ENCODE measurements at regions of chr17 and their contacts with region 1.

Region 1: GRCh38 chr17:74296548-74296936 is 22.5 kb downstream of the DNAI2 start:
- DNase-seq: peak; percentile 66 to 87 (median 78)
- H3K4me3 ChIP-seq: peak overlapping the region in 1 of 59 donors; percentile 3
- H3K27ac ChIP-seq: peak overlapping the region in 46 of 59 donors; percentile 3 to 79 (median 62)
- H3K27me3 ChIP-seq: peaks cover 0 to 4% (median 0%) of the 10 kb centered on the region in 45 donors
- CTCF ChIP-seq: peak; percentile 32 to 88 (median 74)

Region 2: GRCh38 chr17:74152591-74153455 is 143.7 kb before region 1 on chr17:
- intact Hi-C with region 1: no loop called
- DNase-seq: no peak
- H3K4me3 ChIP-seq: no peak overlapping the region
- H3K27ac ChIP-seq: no peak overlapping the region
- H3K27me3 ChIP-seq: peaks cover 0 to 3% (median 0%) of the 10 kb centered on the region in 45 donors
- CTCF ChIP-seq: no peak

Region 3: GRCh38 chr17:74163271-74163821 is 133.2 kb before region 1 on chr17:
- intact Hi-C with region 1: no loop called
- DNase-seq: no peak
- H3K4me3 ChIP-seq: no peak overlapping the region
- H3K27ac ChIP-seq: no peak overlapping the region
- H3K27me3 ChIP-seq: peaks cover 0 to 6% (median 0%) of the 10 kb centered on the region in 45 donors
- CTCF ChIP-seq: no peak

Region 4: GRCh38 chr17:74245145-74245831 is 51.3 kb before region 1 on chr17:
- intact Hi-C with region 1: loop called in 1 of 2 experiments (anchors 5 kb)
- DNase-seq: peak; percentile 40 to 97 (median 93)
- H3K4me3 ChIP-seq: peak overlapping the region in 8 of 59 donors; percentile 3 to 40 (median 12)
- H3K27ac ChIP-seq: peak overlapping the region; percentile 76 to 100 (median 98)
- H3K27me3 ChIP-seq: no peaks in the 10 kb centered on the region
- CTCF ChIP-seq: peak in 8 of 56 donors; percentile 7 to 40 (median 22)

Region 5: DNA sequence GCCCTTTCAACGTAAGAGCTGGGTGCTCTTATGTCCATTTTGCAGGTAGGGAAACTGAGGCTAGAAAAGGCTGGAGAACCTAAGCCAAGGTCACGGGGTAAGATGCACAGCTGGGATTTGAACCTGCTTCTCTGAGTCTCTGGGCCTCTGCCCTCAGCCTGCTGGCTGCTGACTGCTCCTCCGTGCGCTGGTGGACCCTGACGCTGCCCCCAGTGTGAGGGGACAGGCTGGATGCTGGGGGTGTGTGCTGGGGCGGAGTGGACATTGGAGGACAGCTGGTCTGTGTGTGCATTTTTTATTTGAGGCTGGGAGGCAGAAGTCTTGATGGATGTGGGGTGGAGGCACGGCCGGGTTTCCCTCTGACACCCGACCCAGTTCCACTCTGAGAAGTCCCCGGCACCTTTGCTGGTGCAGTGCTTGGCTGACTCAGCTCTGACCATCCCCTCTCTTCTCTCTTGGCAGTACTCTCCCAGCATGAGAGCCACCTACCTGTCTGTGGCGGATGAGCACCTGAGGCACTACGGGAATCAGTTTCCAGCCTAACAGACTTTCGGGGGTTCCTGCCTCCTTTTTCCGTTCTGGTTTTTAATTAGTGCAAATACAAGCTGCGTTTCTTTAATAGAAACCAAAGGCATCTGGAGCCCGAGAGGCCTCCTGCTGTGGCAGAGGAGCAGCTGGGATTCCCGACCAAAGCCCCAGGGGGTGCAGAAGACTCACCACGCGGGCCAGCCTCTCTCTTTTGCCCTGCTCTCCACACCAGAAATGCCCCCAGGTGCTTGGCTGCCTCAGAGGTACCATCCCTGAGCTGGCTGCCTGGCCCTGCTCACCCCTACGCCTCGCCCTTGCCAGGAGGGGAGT is 36.6 kb before region 1 on chr17:
- intact Hi-C with region 1: loop called in 1 of 2 experiments (anchors 5 kb)
- DNase-seq: no peak
- H3K4me3 ChIP-seq: no peak overlapping the region
- H3K27ac ChIP-seq: peak overlapping the region in 18 of 59 donors; percentile 4 to 64 (median 30)
- H3K27me3 ChIP-seq: no peaks in the 10 kb centered on the region
- CTCF ChIP-seq: no peak

Region 6: GRCh38 chr17:74361230-74362068 is 64.9 kb after region 1 on chr17 and contains the start of gene BTBD17:
- intact Hi-C with region 1: loop called in 1 of 2 experiments (anchors 2 kb)
- DNase-seq: peak; percentile 28 to 82 (median 70)
- H3K4me3 ChIP-seq: peak within 1 kb of the TSS in 25 of 59 donors; percentile 2 to 46 (median 14)
- H3K27ac ChIP-seq: peak within 1 kb of the TSS in 49 of 59 donors; percentile 8 to 85 (median 59)
- H3K27me3 ChIP-seq: peaks cover 0 to 27% (median 7%) of the 10 kb centered on the region in 45 donors
- CTCF ChIP-seq: peak in 55 of 56 donors; percentile 58 to 95 (median 77)
- total RNA-seq, gene BTBD17: 0.28 to 6.4 (median 1.6) TPM

Measured in dorsolateral prefrontal cortex (tissue), 120 donors.